GM10248 (cell line): ENCODE measurements at regions of chr12 and their contacts with region 1.

Region 1: GRCh38 chr12:82685790-82686167 is 927 bp upstream of the TMTC2 start:
- DNase-seq: peak; percentile 81
- CTCF ChIP-seq: peak; percentile 93

Region 2: DNA sequence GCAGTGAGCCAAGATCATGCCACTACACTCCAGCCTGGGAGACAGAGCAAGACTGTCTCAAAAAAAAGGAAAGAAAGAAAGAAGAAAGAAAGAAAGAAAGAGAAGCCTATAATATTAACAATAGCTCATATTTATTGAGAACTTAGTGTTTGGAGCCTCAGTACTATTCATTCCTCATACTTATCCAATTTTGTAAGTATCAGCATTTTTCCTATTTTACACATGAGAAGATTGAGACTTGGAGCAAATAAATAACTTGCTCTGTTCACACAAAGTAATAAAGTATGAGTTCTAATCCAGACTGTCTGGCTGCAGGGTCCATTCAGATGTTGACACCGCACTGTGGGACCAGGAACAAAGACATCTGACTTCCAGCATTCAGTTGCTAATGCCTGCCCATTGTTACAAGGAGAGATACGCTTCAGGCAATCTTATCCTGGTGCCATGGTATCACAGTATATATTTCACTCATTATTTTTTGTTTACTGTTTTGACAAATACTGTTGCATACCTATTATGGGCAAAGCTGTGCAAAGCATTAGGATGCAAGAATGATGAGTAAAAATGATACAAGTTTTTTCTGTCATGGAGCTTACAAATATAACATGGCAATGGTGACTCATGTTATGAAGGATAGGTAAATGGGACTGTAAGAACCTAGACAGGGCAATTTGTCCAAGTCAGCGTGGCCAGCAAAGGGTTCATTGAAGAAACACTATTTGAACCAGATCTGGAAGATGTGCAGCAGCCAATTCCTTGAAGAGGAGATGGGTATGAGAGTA is 20.4 kb before region 1 on chr12:
- CTCF ChIA-PET with region 1: interaction called, 18 read pairs
- POLR2A ChIA-PET with region 1: no interaction called
- DNase-seq: no peak
- CTCF ChIP-seq: no peak

Region 3: GRCh38 chr12:82708061-82708879 is 22.5 kb after region 1 on chr12:
- CTCF ChIA-PET with region 1: interaction called, 14 read pairs
- POLR2A ChIA-PET with region 1: no interaction called
- DNase-seq: no peak
- CTCF ChIP-seq: no peak

Region 4: GRCh38 chr12:82867762-82868506 is 182.2 kb after region 1 on chr12:
- CTCF ChIA-PET with region 1: interaction called, 12 read pairs
- POLR2A ChIA-PET with region 1: no interaction called
- DNase-seq: no peak
- CTCF ChIP-seq: no peak

Region 5: GRCh38 chr12:83823431-83823963 is 1137.7 kb after region 1 on chr12:
- CTCF ChIA-PET with region 1: interaction called, 23 read pairs
- POLR2A ChIA-PET with region 1: no interaction called
- DNase-seq: peak; percentile 26
- CTCF ChIP-seq: peak; percentile 33